CD4-positive, alpha-beta T cell (primary cell): ENCODE measurements at regions of chr15 and their contacts with region 1.

Region 1: GRCh38 chr15:71055461-71055860 is 59.8 kb upstream of the THSD4 start:
- DNase-seq: no peak
- ATAC-seq: no peak
- H3K4me3 ChIP-seq: no peak overlapping the region
- H3K4me3 Mint-ChIP-seq: no peak overlapping the region
- H3K27ac ChIP-seq: no peak overlapping the region
- H3K27ac Mint-ChIP-seq: no peak overlapping the region
- H3K4me1 ChIP-seq: no peaks in the 10 kb centered on the region
- H3K4me1 Mint-ChIP-seq: no peaks in the 10 kb centered on the region
- H3K27me3 ChIP-seq: peaks cover 0 to 4% of the 10 kb centered on the region in 2 experiments
- H3K27me3 Mint-ChIP-seq: peaks cover 22% of the 10 kb centered on the region
- CTCF ChIP-seq: no peak

Region 2: DNA sequence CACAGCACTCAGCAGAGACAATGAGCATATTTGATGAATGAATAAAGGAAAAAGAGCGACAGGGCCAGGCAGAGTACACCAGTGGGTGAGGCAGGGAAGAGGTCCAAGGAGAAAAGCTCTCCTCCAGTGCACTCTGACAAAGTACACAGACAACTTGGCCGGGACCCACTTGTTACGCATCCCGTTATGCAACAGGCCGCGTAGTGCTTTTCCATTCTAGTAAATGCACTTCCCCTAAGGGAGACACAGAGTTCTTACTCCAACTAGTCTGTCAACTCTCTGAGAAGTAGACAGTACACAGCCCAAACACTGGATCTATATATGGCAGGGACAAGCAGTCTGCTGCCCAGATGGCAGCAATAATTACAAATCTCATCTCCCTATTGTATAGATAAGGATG is 220.0 kb before region 1 on chr15:
- CTCF ChIA-PET with region 1: no interaction called
- POLR2A ChIA-PET with region 1: no interaction called
- intact Hi-C with region 1: loop called in 1 of 2 experiments (anchors 5 kb)
- DNase-seq: no peak
- ATAC-seq: no peak
- H3K4me3 ChIP-seq: no peak overlapping the region
- H3K4me3 Mint-ChIP-seq: no peak overlapping the region
- H3K27ac ChIP-seq: no peak overlapping the region
- H3K27ac Mint-ChIP-seq: no peak overlapping the region
- H3K4me1 ChIP-seq: no peaks in the 10 kb centered on the region
- H3K4me1 Mint-ChIP-seq: no peaks in the 10 kb centered on the region
- H3K27me3 ChIP-seq: no peaks in the 10 kb centered on the region
- H3K27me3 Mint-ChIP-seq: no peaks in the 10 kb centered on the region
- CTCF ChIP-seq: no peak

Region 3: GRCh38 chr15:71080705-71081104 is 25.2 kb after region 1 on chr15:
- CTCF ChIA-PET with region 1: no interaction called
- POLR2A ChIA-PET with region 1: no interaction called
- intact Hi-C with region 1: no loop called
- DNase-seq: no peak
- ATAC-seq: no peak
- H3K4me3 ChIP-seq: no peak overlapping the region
- H3K4me3 Mint-ChIP-seq: no peak overlapping the region
- H3K27ac ChIP-seq: no peak overlapping the region
- H3K27ac Mint-ChIP-seq: no peak overlapping the region
- H3K4me1 ChIP-seq: no peaks in the 10 kb centered on the region
- H3K4me1 Mint-ChIP-seq: no peaks in the 10 kb centered on the region
- H3K27me3 ChIP-seq: peaks cover 3 to 8% of the 10 kb centered on the region in 2 experiments
- H3K27me3 Mint-ChIP-seq: peaks cover 64% of the 10 kb centered on the region
- CTCF ChIP-seq: no peak